ENCODE measurements at regions of chr3 and their contacts with region 1.

Region 1: GRCh38 chr3:64049136-64049535 is 25.8 kb upstream of the PSMD6 start:
- DNase-seq: peak; percentile 46
- ATAC-seq: peak; percentile 89
- H3K4me3 Mint-ChIP-seq: no peak overlapping the region
- H3K27ac Mint-ChIP-seq: no peak overlapping the region
- H3K4me1 Mint-ChIP-seq: peaks cover 13% of the 10 kb centered on the region
- H3K27me3 Mint-ChIP-seq: peaks cover 37% of the 10 kb centered on the region

Region 2: DNA sequence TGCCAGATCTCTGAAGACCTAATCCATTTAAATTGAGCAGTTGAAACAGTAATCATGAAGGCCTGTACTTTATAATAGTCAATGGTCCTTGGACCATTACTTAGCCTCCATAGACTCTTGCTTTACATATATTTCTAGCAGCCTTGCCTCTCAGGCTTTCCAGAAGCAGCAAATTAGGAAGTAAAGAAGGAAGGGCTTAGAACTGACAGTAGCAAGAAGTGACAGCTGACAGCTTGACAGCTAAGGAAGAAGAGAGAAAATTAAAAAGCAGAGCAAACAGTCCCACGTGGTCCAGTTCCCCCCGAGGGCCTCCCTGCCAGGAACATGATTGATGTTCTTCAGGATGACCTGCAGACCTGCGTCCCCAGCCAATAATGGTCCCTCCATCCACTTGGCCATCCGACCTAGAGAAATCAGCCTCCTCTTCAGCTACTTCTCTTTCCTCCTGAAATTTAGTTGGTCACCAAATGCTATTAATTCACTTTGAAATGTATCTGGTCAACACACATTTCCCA is 10.8 kb before region 1 on chr3:
- CTCF ChIA-PET with region 1: no interaction called
- POLR2A ChIA-PET with region 1: no interaction called
- intact Hi-C with region 1: no loop called
- DNase-seq: no peak
- ATAC-seq: no peak
- H3K4me3 Mint-ChIP-seq: no peak overlapping the region
- H3K27ac Mint-ChIP-seq: no peak overlapping the region
- H3K4me1 Mint-ChIP-seq: no peaks in the 10 kb centered on the region
- H3K27me3 Mint-ChIP-seq: peaks cover 19% of the 10 kb centered on the region

Region 3: DNA sequence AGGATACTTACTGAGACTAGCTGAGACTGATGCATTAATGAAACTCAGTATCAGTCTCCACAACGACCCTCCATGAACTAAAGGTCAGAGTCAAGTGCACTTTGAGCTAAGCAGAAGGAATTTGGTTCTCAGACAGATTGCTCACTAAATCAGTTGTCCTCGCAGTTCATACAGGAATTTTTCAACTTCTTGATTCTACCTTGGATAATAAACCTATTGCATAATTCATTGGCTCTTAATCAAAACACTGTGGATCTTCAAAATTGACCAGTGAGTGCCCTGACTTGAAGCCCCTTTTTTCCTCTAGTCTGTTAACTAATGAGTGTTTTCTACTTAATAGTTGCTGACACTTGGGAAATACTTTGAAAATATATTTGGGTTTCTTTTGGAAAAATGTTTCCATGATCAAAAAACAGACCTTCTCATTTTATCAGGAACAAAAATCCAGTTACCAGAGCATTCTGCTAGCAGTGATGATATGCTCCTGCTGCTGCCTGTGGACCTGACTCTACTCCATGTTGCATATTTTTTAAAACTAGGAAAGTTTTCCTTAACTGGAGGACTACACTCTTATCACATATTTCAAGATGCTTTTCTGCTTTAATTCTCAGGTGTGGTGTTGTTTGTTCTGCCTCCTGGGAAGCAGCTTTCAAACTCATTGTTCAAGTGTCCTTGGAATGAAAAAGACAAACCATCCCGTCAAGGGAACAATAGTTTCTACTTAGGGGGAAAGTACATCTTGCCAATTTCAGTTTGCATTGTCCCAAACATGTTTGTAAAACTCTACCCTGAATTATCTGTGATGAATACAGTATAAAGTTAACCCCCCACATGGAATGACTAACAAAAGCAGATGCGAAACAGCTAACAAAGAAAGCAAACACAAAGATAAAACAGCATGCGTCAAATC is 14.0 kb after region 1 on chr3:
- CTCF ChIA-PET with region 1: no interaction called
- POLR2A ChIA-PET with region 1: no interaction called
- intact Hi-C with region 1: no loop called
- DNase-seq: no peak
- ATAC-seq: no peak
- H3K4me3 Mint-ChIP-seq: no peak overlapping the region
- H3K27ac Mint-ChIP-seq: no peak overlapping the region
- H3K4me1 Mint-ChIP-seq: no peaks in the 10 kb centered on the region
- H3K27me3 Mint-ChIP-seq: peaks cover 22% of the 10 kb centered on the region

Region 4: DNA sequence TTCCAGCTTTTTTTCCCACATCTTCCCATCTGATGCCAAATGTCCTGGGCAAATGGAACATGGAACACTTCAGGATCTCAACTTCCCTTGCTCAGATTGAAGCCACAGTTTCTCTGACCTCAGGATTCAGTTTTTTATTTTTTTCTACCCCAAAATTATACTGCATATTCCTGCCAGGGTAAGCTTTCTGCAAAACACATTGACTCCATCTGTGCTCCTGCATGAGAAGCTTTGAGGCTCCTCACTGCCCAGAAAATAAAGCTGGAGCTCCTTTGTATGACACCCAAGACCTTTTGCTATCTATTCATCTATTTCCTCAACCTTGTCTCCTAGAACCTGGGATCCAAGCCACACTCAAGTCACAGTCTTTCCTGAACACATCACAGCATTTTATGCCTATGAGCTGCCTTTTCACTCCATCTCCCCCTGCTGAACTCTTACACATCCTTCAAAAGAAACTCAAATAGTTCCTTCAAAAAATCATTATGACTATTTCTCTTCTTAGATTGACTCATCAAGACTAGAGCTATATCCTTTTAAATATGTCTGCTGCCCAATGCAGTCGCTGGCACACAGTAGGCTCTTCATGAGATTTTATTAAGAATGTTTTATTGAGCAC is 31.6 kb after region 1 on chr3:
- CTCF ChIA-PET with region 1: no interaction called
- POLR2A ChIA-PET with region 1: no interaction called
- intact Hi-C with region 1: loop called in 1 of 2 experiments (anchors 1 kb)
- DNase-seq: no peak
- ATAC-seq: peak; percentile 72
- H3K4me3 Mint-ChIP-seq: no peak overlapping the region
- H3K27ac Mint-ChIP-seq: no peak overlapping the region
- H3K4me1 Mint-ChIP-seq: peaks cover 4% of the 10 kb centered on the region
- H3K27me3 Mint-ChIP-seq: peaks cover 21% of the 10 kb centered on the region